Activated T-helper 2 cell treated with anti-CD3 and anti-CD28 coated beads, Interferon-gamma antibody, Interleukin-2, Interleukin-4, amounts not matched to agents 10 μg/mL and 5 μg/mL and 100 μg/mL, durations not matched to agents 14 hours and 24 hours and 36 hours (primary cell): ENCODE measurements at regions of chr2 and their contacts with region 1.

Region 1: GRCh38 chr2:46364797-46365457 is 67.7 kb downstream of the EPAS1 start:
- DNase-seq: no peak
- H3K4me3 Mint-ChIP-seq: no peak overlapping the region
- H3K27ac Mint-ChIP-seq: no peak overlapping the region
- H3K4me1 Mint-ChIP-seq: peaks cover 50% of the 10 kb centered on the region
- H3K27me3 Mint-ChIP-seq: peaks cover 3% of the 10 kb centered on the region

Region 2: GRCh38 chr2:46010925-46011490 is 353.9 kb before region 1 on chr2:
- intact Hi-C with region 1: loop called (anchors 1 kb)
- DNase-seq: no peak
- H3K4me3 Mint-ChIP-seq: no peak overlapping the region
- H3K27ac Mint-ChIP-seq: peak overlapping the region; percentile 23
- H3K4me1 Mint-ChIP-seq: peaks cover 27% of the 10 kb centered on the region
- H3K27me3 Mint-ChIP-seq: no peaks in the 10 kb centered on the region

Region 3: GRCh38 chr2:46187112-46187618 is 177.8 kb before region 1 on chr2:
- intact Hi-C with region 1: loop called (anchors 10 kb)
- DNase-seq: peak; percentile 26
- H3K4me3 Mint-ChIP-seq: peak overlapping the region; percentile 50
- H3K27ac Mint-ChIP-seq: peak overlapping the region; percentile 87
- H3K4me1 Mint-ChIP-seq: peaks cover 17% of the 10 kb centered on the region
- H3K27me3 Mint-ChIP-seq: no peaks in the 10 kb centered on the region

Region 4: GRCh38 chr2:46304635-46305034 is 60.3 kb before region 1 on chr2:
- intact Hi-C with region 1: loop called (anchors 2 kb)
- DNase-seq: peak; percentile 18
- H3K4me3 Mint-ChIP-seq: peak overlapping the region; percentile 52
- H3K27ac Mint-ChIP-seq: no peak overlapping the region
- H3K4me1 Mint-ChIP-seq: peaks cover 48% of the 10 kb centered on the region
- H3K27me3 Mint-ChIP-seq: peaks cover 44% of the 10 kb centered on the region

Region 5: DNA sequence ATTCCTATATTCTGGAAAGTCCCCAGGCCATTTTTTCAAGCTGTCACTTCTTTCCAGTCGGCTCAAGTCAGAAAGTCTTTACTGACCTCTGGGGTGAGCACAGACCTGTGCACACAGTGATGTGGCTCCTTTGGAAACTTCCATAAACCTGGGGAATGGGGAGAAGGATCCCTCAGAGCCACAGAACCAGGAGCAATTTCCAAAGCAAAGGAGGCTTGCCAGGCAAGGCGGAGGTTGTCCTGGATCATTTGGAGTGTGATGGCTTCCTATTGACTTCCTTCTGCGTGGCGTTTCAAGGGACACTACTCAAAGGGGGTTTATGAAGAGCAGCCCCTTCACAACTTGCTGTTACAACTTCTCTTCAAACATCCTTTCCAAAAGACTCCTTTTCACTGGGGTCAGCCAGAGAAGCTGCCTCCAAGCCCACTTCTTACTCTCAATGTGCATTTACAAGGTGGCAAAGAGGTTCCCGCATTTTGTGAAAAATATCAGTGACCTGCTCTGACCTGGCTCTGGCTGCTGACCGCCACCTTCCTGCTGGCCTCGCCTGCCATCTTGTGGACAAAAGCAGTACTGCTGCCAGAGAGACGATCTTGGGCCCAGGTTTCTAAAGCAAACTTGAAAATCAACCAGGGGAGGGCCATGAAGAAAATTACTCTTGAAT is 96.2 kb after region 1 on chr2:
- intact Hi-C with region 1: loop called (anchors 1 kb)
- DNase-seq: peak; percentile 60
- H3K4me3 Mint-ChIP-seq: no peak overlapping the region
- H3K27ac Mint-ChIP-seq: peak overlapping the region; percentile 62
- H3K4me1 Mint-ChIP-seq: peaks cover 33% of the 10 kb centered on the region
- H3K27me3 Mint-ChIP-seq: no peaks in the 10 kb centered on the region